ENCODE measurements at regions of chr3 and their contacts with region 1.

Region 1: DNA sequence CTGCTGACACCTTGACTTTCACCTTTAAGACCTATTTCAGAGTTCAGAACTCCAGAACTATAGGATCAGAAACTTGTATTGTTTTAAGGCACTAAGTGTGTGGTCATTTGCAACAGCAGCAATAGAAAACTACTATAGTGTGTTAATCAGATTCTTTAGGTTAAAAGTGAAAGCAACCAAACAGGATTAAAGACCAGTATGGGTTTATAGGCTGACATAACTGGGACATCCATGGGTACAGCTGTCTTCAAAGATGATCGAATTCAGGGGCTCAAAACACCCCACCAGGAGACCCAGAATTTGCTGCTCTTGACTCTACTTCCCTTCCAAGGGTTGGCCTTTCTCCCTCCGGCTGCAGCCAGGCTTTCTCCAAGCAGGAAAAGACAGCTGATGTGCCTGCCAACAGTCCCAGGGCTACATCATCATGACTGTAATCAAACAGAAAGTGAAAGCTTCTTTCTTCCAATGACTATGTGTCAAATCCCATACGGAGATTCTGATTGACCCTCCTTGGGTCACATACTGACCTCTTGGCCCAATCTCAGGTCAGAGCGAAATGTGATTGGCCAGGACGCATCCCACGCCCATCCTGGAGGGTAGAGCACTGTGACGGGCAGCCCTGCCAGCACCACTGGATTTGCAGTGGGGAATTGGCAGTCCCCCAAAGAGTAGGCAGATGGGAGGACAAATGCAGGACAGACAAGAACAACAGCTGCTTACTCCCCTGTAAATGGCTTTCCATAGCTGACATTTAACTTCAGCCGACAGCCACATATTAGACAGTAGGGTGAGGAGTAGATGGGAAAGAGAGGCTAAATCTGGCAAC is 51.4 kb upstream of the RNF7 start:
- DNase-seq: peak in 1 of 2 experiments; percentile 13
- H3K4me3 ChIP-seq: no peak overlapping the region; the same call in 1 of the 2 replicates
- H3K27ac ChIP-seq: no peak overlapping the region
- H3K4me1 ChIP-seq: no peaks in the 10 kb centered on the region
- H3K27me3 ChIP-seq: no peaks in the 10 kb centered on the region
- CTCF ChIP-seq: no peak

Region 2: DNA sequence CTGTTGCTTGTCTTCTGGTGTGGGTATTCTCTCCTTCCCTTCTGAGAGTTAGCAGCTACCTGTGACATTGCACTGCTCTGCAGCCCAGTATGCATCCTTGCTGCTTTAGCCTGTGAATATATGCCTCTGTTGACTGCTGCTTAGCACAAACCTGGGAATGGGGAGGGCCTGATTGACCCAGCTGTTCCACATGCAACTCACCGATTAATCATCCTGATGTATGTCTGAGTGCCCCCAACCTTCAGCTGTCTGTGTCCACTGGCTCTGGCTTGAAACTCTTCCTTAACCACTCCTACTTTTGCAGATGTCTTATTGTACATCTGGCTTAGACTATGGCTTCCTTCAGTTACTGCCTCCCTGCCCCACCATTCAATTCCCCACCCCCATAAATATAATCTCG is 80.8 kb before region 1 on chr3:
- CTCF ChIA-PET with region 1: no interaction called
- POLR2A ChIA-PET with region 1: interaction called, 10 read pairs
- intact Hi-C with region 1: no loop called
- DNase-seq: no peak
- H3K4me3 ChIP-seq: no peak overlapping the region
- H3K27ac ChIP-seq: no peak overlapping the region
- H3K4me1 ChIP-seq: no peaks in the 10 kb centered on the region
- H3K27me3 ChIP-seq: no peaks in the 10 kb centered on the region
- CTCF ChIP-seq: no peak

Region 3: DNA sequence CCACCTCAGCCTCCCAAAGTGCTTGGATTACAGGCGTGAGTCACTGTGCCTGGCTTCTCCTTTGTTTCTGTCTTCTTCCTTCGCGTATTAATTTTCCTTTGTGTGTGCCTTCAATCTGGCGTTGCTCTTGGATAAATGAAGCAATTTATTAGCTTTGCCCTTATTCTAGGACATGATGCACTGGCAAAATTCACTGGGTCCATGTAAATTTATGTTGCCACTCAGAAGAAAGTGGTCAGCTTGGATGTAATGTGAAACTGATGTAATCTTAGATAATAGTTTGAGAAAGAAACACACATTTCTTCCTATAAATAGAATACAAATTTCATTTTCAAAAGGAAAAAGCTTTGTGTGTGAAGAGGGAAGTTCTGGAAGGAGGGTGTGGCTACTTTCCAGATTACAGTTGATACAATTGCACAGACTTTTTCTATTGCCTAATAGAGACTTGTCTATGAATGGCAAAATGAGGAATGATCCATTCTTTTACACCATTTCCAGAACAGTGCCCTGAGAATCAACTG is 166.5 kb after region 1 on chr3:
- CTCF ChIA-PET with region 1: no interaction called
- POLR2A ChIA-PET with region 1: no interaction called
- intact Hi-C with region 1: no loop called
- DNase-seq: no peak
- H3K4me3 ChIP-seq: no peak overlapping the region
- H3K27ac ChIP-seq: no peak overlapping the region
- H3K4me1 ChIP-seq: no peaks in the 10 kb centered on the region
- H3K27me3 ChIP-seq: no peaks in the 10 kb centered on the region
- CTCF ChIP-seq: no peak